Posterior cingulate gyrus (tissue), 11 donors: ENCODE measurements at regions of chr19 and their contacts with region 1.

Region 1: DNA sequence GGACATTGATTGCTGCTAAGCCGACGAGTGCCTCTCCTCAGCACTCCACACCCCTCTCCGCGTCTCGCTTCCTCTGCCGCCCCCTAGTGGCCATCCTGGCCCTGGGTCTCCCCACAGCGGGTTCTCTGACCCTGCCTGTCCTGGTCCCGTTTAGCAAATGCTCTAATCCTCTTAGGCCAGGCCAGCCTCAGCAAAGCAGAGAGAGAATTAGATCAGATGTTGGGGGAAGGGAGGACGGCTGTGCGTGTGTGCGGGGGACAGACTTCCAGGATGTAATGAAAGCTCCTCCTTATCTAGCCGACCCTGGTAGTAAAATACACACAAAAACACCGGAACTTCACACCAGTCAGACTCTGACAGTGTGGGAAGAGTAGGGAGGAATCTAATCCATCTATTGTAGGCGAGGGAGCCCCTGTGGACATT is 4.5 kb downstream of the TPRX2 start:
- DNase-seq: peak; percentile 39 to 97 (median 86)

Region 2: GRCh38 chr19:47765523-47766358 is 97.8 kb before region 1 on chr19:
- intact Hi-C with region 1: loop called (anchors 10 kb)
- DNase-seq: peak in 9 of 10 donors; percentile 36 to 95 (median 65)

Region 3: DNA sequence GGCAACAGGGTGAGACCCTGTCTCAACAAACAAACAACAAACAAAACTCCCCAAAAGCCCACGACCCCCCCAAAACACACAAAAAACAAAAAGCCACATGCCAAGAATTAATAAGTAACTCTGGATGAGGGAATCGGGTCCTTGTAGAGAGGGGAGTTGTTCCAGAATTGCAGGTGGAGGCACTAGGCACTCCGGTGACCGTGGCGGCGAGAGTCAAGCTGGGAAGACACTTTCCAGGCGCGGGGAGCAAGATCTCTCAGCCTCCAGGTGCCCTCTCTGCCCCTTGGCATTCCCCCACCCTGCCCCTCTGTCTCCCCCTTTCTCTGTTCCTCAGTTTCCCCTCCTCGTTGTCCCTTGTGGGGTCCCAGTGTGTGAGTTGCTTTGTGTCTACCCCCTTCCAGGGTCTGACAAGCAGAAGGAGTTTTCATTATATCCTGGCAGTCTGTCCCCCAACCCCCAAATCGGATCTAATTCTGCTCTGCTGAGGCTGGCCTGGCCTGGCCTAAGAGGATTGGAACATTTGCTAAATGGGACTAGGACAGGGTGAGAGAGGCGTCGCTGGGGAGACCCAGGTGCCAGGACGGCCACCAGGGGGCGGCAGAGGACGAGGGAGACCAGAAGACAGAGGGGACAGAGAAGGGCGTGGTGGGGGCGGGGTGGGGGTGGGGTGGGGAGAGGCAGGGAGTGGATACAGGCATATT is 50.1 kb before region 1 on chr19:
- intact Hi-C with region 1: loop called (anchors 10 kb)
- DNase-seq: peak in 7 of 10 donors; percentile 38 to 88 (median 62)

Region 4: DNA sequence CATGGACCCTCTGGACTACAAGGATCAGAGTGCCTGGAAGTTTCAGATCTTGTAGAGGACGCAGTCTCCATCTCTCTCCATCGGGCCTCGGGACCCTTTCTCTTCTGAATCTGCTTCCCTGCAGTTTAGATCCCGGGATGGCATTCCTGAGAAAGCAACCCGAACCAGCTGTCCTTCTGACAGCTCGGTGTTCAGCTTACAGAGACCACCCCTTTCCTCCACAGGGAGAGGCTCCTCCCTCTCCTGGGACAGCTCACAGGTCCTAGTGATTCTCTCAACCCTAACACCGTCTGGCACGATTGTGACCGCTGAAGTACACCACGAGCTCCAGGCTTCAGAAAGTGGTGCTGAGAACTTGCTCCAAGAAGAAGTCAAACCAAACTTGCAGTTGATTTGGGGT is 23.6 kb before region 1 on chr19:
- intact Hi-C with region 1: no loop called
- DNase-seq: peak in 2 of 10 donors; percentile 6 to 35